Activated naive CD4-positive, alpha-beta T cell treated with anti-CD3 and anti-CD28 coated beads for 36 hours (primary cell): ENCODE measurements at regions of chr2 and their contacts with region 1.

Region 1: GRCh38 chr2:159647667-159648066 is 31.3 kb upstream of the BAZ2B start:
- DNase-seq: no peak
- H3K4me3 Mint-ChIP-seq: no peak overlapping the region
- H3K27ac Mint-ChIP-seq: no peak overlapping the region
- H3K4me1 Mint-ChIP-seq: no peaks in the 10 kb centered on the region
- H3K27me3 Mint-ChIP-seq: no peaks in the 10 kb centered on the region

Region 2: DNA sequence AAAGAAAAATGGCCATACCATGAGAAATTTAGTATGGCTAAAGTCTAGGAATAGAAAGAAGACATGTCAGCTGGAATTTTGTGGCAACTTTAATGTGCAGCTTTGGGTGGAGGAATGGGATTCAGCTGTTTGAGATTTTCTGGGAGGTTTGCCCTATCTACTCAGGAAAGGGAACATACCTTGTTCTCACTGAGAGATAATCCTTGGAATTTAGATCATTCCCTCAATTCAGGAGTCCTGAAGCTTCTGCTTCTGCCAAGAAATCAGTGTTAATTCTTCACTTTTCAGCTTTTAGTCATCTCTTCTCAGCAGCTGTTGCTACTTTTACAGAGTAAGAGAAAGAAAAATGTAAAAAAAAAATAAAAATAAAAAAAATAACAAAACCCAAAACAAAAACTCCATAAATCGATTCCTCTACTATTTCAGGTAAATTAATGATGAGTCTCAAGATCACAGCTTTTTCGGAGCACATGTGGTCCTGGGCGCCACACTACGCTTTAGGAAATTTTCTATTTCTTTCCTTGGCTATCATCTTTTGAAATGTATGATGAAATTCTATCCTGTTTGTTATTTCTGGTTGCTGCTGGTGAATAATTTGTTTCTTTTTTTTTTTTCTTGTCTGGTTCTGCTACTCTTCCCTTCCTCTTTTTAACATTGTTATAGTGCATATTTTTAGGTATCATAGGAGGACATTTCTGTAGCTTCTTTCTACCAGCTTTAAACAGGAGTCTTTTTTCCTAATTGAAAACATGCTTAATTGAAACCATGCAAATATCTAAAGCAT is 12.5 kb before region 1 on chr2:
- CTCF ChIA-PET with region 1: no interaction called
- intact Hi-C with region 1: no loop called
- DNase-seq: no peak
- H3K4me3 Mint-ChIP-seq: no peak overlapping the region
- H3K27ac Mint-ChIP-seq: no peak overlapping the region
- H3K4me1 Mint-ChIP-seq: no peaks in the 10 kb centered on the region
- H3K27me3 Mint-ChIP-seq: no peaks in the 10 kb centered on the region

Region 3: GRCh38 chr2:159684796-159685195 is 37.1 kb after region 1 on chr2:
- CTCF ChIA-PET with region 1: no interaction called
- intact Hi-C with region 1: loop called (anchors 5 kb)
- DNase-seq: no peak
- H3K4me3 Mint-ChIP-seq: no peak overlapping the region
- H3K27ac Mint-ChIP-seq: no peak overlapping the region
- H3K4me1 Mint-ChIP-seq: no peaks in the 10 kb centered on the region
- H3K27me3 Mint-ChIP-seq: no peaks in the 10 kb centered on the region